ENCODE measurements at regions of chr3 and their contacts with region 1.

Region 1: DNA sequence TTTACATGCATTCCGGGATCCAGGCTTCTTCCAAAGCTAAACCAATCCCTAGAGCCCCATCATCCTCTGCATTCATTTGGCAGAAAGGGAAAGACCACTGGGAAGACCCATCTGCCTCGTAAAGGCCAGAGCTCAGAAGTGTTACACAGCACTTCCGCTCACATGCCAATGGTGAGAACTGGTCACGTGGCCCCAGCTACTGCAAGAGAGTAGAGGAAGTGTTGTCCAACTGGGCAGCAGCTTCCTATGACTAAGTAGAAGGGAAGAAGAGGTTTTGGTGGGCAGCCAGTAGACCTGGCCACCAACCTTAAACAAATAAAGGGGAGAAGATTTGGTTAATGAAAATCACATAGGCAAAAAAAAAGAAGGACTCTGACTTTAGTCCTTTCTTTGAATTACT is 74.4 kb upstream of the PPP2R3A start:
- DNase-seq: no peak
- H3K4me3 ChIP-seq: no peak overlapping the region
- H3K27ac ChIP-seq: no peak overlapping the region
- H3K4me1 ChIP-seq: no peaks in the 10 kb centered on the region
- H3K27me3 ChIP-seq: no peaks in the 10 kb centered on the region
- CTCF ChIP-seq: no peak

Region 2: GRCh38 chr3:134607054-134608022 is 1283.8 kb before region 1 on chr3:
- intact Hi-C with region 1: loop called (anchors 5 kb)
- DNase-seq: no peak
- H3K4me3 ChIP-seq: no peak overlapping the region
- H3K27ac ChIP-seq: no peak overlapping the region
- H3K4me1 ChIP-seq: no peaks in the 10 kb centered on the region
- H3K27me3 ChIP-seq: no peaks in the 10 kb centered on the region
- CTCF ChIP-seq: no peak

Region 3: DNA sequence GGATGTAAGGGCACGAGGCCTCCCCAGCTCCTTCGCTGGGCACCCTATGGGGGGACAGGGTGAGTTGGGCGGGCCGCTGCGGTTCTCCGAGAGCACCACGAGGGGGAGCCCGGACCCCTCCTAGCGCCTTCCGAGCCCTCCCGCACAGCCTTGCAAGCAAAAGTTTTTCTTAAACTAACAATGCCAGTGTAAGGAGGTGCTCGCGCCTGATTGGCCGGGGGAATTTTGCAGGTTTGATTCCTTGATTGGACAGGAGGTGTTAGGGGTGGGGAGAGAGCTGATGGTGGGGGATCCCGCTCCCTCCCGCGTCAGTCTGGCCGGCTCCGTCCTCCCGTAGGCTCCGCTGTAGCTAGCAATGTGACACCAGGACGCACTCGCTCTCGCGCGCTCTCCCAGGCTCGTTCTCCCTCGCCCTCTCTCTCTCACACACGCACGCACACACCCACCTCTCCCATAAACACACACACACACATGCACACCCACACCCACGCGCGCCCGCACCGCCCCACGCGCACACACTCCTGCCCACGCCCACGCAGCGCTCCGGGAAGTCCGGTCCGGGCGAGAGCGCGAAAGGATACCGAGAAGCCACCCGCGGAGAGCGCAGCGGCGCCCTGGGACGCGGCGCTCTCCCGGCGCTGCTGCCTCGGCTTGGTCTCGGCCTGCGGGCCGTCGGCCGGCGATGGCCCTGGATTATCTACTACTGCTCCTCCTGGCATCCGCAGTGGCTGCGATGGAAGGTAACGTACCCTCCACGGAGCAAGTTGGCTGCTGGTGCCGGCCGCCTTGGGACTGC is 1096.0 kb before region 1 on chr3 and contains the start of gene EPHB1:
- intact Hi-C with region 1: loop called (anchors 5 kb)
- DNase-seq: peak; percentile 71 to 89
- H3K4me3 ChIP-seq: peak within 1 kb of the TSS; percentile 53 to 64
- H3K27ac ChIP-seq: peak within 1 kb of the TSS; percentile 34 to 68
- H3K4me1 ChIP-seq: peaks cover 0 to 47% (median 39%) of the 10 kb centered on the region in 4 donors
- H3K27me3 ChIP-seq: no peaks in the 10 kb centered on the region
- CTCF ChIP-seq: peak; percentile 86 to 94